ENCODE measurements at regions of chr1 and their contacts with region 1.

Region 1: GRCh38 chr1:221435504-221435904 is 306.4 kb downstream of the DUSP10 start:
- DNase-seq: peak; percentile 52
- CTCF ChIP-seq: peak; percentile 72

Region 2: DNA sequence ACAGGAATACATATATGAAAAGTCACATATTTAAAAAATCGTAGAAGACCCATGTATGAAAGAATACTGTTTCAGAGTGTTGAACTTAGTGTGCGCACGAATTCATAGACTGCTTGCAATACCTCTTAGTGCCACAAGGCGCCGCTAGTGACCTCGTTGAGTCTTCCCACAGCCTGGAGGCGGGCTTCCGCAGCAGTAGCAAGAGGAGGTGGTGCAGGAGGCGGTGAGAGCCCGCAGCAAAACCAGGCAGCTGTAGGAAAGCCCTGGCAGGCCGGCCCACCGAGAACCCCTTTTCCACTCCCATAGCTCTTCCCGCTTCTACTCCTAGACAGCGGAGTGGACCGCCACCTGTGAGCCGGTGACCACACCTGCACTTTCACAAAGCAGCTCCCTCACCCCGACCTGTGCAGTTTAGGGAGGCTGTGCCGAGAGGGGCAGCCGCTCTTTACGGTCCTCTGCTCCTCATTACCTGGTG is 625.3 kb before region 1 on chr1:
- CTCF ChIA-PET with region 1: interaction called, 21 read pairs
- POLR2A ChIA-PET with region 1: interaction called, 3 read pairs
- DNase-seq: peak; percentile 79
- CTCF ChIP-seq: peak; percentile 88

Region 3: GRCh38 chr1:220873868-220874655 is 561.4 kb before region 1 on chr1:
- CTCF ChIA-PET with region 1: interaction called, 14 read pairs
- POLR2A ChIA-PET with region 1: no interaction called
- DNase-seq: peak; percentile 51
- CTCF ChIP-seq: peak; percentile 69

Region 4: DNA sequence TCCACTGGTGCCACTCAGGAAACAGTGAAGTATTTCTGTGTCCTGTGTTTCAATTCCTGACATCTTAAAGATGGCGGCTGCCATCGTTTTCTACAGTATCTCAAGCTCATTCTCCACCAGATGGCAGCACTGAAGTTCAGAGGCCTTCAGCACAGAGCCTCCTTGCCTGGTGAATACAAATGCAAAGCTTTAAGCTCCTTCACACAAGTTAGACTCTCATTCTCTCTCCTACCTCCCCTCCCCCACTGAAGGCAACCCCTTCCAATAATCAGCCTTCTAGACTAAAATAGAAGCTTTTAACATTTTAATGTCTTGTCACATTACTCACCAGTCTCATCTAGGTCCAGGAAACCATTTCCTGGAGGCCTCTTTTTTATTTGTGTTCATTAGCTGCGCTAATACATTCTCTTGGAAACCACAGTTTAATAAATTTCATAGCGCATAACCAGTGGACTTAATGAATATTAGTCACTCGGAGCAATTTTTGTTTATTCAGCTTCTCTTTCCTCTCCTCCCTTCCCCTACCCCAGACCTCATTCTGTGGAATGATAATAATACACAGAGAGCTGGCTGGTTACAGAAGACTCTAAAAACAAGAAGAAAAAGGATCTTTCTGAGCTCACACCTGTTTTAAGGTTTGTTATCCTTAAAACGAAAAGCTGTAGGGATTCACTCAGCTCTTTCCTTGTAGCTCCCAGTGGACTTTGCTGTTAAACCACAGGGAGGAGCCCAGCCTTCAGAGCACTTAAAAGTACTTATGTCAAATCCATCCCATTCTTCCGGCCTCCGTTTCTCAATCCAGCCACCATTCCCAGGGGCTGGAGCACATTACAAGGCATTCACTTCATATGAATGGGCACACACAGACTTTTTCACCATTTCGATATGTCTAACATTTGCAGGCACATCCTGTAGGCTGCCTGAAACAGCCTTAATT is 171.4 kb before region 1 on chr1:
- CTCF ChIA-PET with region 1: interaction called, 10 read pairs
- POLR2A ChIA-PET with region 1: no interaction called
- DNase-seq: peak; percentile 42
- CTCF ChIP-seq: peak; percentile 37

Region 5: DNA sequence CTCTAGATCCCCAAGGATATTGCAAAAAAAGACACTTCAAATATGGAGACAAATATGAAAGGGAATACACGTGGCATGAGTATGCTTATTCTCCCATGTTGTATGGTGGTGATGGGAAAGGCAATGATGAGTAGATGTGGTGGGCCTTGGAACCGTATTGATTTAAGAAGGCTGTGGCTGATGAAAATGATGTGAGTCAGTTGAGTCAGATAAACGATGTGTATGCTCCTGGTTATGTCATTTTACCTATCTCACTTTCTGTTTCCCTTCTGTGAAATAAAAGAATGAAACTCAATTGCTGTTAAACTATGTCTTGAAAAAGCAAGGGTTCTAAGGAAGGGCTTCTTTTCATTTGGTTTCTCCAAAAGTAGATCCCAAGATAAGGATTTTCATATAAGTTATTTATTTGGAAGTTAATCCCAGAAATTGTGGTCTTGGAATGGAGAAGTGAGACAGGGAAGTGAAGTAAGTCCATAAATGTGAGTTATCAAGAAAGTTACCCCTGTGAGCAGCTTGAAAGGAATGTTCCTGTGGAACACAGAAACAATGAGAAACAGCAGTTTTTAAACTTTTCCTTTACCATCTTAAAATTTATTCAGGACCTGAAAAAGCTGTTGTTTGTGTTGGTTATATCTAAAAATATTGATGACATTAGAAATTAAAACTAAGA is 14.4 kb after region 1 on chr1:
- CTCF ChIA-PET with region 1: interaction called, 46 read pairs
- POLR2A ChIA-PET with region 1: no interaction called
- DNase-seq: peak; percentile 14
- CTCF ChIP-seq: no peak